ENCODE measurements at regions of chr10 and their contacts with region 1.

Region 1: DNA sequence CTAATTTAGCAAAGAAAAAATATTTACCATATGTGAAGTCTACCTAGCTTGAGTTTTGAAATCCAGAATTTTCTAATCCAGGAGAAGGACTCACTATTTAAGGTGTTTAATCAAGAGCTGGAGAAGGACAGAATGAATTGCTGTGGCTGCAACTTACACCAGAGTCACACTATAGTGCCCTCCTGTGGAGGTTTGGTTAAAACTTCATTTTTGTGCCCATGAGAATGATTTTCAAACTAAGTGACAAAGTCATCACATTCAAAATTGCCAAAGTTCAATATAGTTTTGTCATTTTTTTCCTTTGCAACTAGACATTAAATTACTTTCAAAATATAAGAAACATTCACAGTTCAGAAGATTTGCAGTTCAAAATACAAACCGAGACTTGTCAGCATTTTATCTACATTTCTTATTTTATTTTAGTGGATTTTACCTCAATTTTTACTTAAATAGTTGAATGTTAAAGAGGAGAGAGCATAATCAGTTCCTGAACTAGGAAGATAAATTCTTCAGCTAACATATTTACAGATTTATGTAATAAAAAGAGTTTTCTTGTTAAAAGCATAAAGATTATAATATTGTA is 70.7 kb downstream of the CABCOCO1 start:
- DNase-seq: peak; percentile 96
- ATAC-seq: peak; percentile 88
- H3K4me3 ChIP-seq: no peak overlapping the region
- H3K27ac ChIP-seq: no peak overlapping the region
- H3K4me1 ChIP-seq: no peaks in the 10 kb centered on the region
- H3K27me3 ChIP-seq: 0 out of 2 replicates have a peak, but pooled peaks cover 7% of the 10 kb centered on the region
- CTCF ChIP-seq: peak; percentile 100

Region 2: DNA sequence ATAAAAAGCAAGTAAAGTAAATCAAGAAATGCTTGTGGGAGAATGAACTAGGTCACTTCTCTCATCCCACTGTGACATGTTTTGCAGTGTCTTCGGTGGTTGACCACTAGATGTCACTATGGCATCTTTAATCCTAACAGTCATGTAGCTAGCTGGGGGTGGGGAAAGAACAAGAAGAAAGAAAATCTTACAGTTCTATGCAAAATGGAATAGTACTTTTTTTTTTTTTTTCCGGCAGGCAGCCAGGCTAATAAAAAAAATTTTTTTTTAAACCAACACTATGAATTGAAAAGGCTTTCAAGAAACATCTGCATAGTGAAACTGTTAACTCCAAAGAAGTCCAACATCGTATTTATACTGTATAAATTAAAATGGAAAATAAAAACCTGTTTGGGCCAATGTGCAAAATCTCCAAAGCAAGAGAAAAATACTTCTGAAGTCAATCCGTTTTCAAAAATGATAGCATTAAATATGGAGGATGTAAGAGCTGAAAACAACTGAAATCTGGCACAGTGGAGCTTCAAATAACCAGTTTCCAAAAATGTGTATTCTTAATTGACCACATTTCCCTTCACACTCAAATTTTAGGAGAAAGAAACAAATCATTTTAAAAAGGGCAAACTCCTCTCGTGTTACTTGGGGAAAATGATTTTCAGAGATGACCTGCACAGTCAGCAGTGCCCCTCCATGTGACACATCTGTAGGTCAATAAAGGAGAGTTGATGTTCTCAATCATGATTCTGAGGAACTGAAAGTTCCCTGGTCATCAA is 916.6 kb before region 1 on chr10:
- CTCF ChIA-PET with region 1: no interaction called
- POLR2A ChIA-PET with region 1: no interaction called
- intact Hi-C with region 1: loop called (anchors 2 kb)
- DNase-seq: peak; percentile 97
- ATAC-seq: peak; percentile 93
- H3K4me3 ChIP-seq: no peak overlapping the region
- H3K27ac ChIP-seq: no peak overlapping the region
- H3K4me1 ChIP-seq: peaks cover 6% of the 10 kb centered on the region; the same call in 1 of the 2 replicates
- H3K27me3 ChIP-seq: no peaks in the 10 kb centered on the region
- CTCF ChIP-seq: peak; percentile 100

Region 3: DNA sequence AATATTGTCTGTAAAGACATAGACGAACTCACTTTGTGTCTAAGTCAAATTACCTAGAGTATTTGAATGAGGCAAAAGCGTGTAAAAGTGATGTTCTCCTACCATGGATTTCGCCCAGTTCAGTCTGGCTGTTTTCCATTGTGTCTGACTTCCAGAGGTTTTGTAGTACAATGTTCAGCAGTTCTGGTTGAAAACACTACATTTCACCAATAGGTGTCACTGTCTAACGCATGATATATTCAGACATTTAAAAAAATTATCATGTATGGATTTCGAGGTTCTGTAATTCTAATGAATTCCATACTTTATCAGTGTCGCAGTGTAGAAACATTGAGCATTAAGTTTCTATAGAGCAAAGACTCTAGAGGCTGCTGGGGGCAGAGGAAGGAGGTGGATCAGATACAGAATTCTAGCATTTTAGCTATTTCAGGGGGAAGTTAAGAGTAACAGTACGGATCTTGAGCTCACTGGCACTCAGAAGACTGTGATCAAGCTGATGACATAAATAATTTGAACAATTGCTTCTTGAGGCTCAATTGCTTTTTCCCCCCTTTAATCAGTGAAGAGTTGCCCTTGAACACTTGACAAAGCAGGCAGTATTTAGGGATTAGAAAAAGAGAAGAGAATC is 592.6 kb before region 1 on chr10:
- CTCF ChIA-PET with region 1: no interaction called
- POLR2A ChIA-PET with region 1: no interaction called
- intact Hi-C with region 1: loop called (anchors 1 kb)
- DNase-seq: peak; percentile 96
- ATAC-seq: peak; percentile 83
- H3K4me3 ChIP-seq: no peak overlapping the region
- H3K27ac ChIP-seq: no peak overlapping the region
- H3K4me1 ChIP-seq: peaks cover 11% of the 10 kb centered on the region
- H3K27me3 ChIP-seq: no peaks in the 10 kb centered on the region
- CTCF ChIP-seq: peak; percentile 99

Region 4: DNA sequence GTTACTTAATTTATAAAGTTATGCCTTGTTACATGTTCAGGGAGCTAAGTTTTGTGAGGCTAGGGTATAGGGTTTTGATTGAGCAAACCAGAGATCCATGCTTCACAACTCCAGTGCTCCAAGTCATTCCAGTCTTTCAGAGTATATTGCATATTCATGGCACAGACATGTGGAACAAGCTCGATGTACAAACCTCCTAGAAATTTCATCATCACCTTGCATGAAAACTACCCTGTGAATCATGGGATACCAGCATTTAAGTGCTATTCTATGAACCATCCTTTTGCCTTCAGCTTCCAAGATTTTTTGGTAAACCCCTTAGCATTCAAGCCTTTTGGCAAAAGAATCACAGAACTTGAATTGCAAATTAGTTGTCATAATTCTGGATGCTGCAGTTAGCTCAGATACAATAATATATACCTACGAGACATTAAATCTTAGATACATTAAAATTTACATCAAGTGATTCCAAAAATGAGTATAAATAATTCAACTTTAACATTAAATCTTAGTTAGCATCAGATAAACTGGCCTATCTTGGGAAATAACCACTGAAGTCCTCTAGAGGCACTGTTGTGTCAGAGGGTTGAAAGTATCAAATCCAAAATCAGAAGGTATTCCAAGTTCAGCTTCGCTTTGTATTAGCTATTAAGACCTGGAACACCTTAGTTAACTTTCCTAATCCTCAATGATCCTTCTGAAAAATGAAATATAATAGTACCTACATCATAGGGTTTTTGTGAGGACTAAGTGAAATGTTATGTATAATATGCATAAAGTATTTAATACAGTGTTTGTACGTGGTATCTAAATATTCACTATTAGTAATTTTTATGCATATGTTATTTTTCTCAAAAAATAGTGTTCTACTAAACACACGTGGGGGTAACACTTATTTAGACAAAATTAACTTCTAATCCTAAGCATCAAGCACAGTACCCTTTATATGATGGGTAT is 126.2 kb before region 1 on chr10:
- CTCF ChIA-PET with region 1: interaction called, 9 read pairs
- POLR2A ChIA-PET with region 1: no interaction called
- intact Hi-C with region 1: loop called (anchors 1 kb)
- DNase-seq: peak; percentile 84
- ATAC-seq: peak; percentile 90
- H3K4me3 ChIP-seq: no peak overlapping the region
- H3K27ac ChIP-seq: no peak overlapping the region
- H3K4me1 ChIP-seq: no peaks in the 10 kb centered on the region
- H3K27me3 ChIP-seq: no peaks in the 10 kb centered on the region
- CTCF ChIP-seq: peak; percentile 99

Region 5: DNA sequence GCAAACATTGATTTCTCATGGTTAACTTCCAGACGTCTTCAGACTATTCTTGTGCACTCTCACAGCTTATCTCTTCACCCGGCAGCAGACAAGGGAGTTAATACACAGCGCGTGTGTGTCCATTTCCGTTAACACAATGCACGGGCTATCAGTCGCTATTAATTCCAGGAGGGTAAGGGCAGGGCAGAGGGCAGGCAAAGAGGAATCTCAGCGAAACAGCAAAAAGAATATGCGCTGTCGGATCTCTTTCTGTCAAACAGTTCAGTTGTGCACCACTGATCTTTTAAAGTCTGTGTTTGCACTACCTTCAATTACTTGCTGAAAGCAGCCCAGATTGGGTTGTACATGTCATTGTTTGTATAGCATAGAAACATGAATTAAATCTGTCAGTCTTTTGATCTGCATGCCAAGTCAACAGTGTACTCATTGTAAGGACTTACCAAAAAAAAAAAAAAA is 111.8 kb before region 1 on chr10:
- CTCF ChIA-PET with region 1: interaction called, 3 read pairs
- POLR2A ChIA-PET with region 1: no interaction called
- intact Hi-C with region 1: loop called (anchors 5 kb)
- DNase-seq: peak; percentile 89
- ATAC-seq: peak; percentile 92
- H3K4me3 ChIP-seq: peak overlapping the region; percentile 34
- H3K27ac ChIP-seq: no peak overlapping the region
- H3K4me1 ChIP-seq: peaks cover 11% of the 10 kb centered on the region
- H3K27me3 ChIP-seq: no peaks in the 10 kb centered on the region
- CTCF ChIP-seq: no peak

Region 6: GRCh38 chr10:61669161-61669725 is 64.2 kb before region 1 on chr10:
- CTCF ChIA-PET with region 1: interaction called, 5 read pairs
- POLR2A ChIA-PET with region 1: no interaction called
- intact Hi-C with region 1: loop called (anchors 5 kb)
- DNase-seq: no peak
- ATAC-seq: peak; percentile 49; the same call in 1 of the 2 replicates
- H3K4me3 ChIP-seq: no peak overlapping the region
- H3K27ac ChIP-seq: no peak overlapping the region
- H3K4me1 ChIP-seq: no peaks in the 10 kb centered on the region
- H3K27me3 ChIP-seq: no peaks in the 10 kb centered on the region
- CTCF ChIP-seq: peak; percentile 56

Region 7: DNA sequence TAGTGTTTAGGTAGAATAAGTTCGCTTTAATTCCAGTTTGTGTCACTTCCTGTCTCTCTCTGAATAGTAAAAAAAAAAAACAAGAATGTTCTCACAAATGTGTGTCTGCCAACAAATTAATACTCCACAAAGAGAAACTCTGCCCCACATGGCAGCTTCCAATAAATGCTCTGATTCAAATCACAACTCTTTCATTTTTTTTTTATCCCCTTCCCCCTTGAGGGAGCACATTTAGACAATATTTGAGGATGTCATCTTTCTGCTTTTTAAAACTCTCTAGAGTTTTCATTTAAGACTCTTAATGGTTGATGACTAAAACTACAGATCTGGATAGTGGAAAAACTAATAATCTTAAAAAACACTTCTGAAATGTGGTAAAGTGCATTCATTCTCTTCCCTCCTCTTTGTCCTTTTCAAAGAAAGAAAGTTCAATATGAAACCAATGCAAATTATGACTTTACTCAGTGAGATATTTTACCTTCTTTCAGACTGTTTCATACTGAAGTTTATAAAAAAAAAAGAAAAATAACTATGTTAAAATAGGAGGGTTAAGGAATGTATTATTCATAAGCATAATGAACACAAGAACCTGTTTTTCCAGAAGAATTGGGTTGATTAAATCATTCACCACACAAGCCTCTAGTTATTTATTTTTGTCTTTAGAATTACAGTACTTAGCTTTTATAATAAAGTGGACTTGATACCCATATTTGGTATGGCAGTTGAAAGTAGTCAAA is 210.4 kb after region 1 on chr10:
- CTCF ChIA-PET with region 1: no interaction called
- POLR2A ChIA-PET with region 1: interaction called, 19 read pairs
- intact Hi-C with region 1: no loop called
- DNase-seq: peak; percentile 99
- ATAC-seq: peak; percentile 14
- H3K4me3 ChIP-seq: peak overlapping the region; percentile 31
- H3K27ac ChIP-seq: peak overlapping the region; percentile 72
- H3K4me1 ChIP-seq: peaks cover 65% of the 10 kb centered on the region
- H3K27me3 ChIP-seq: no peaks in the 10 kb centered on the region
- CTCF ChIP-seq: peak; percentile 73

Region 8: GRCh38 chr10:62715383-62715782 is 981.9 kb after region 1 on chr10:
- CTCF ChIA-PET with region 1: no interaction called
- POLR2A ChIA-PET with region 1: no interaction called
- intact Hi-C with region 1: no loop called
- DNase-seq: no peak
- ATAC-seq: no peak
- H3K4me3 ChIP-seq: no peak overlapping the region
- H3K27ac ChIP-seq: no peak overlapping the region
- H3K4me1 ChIP-seq: no peaks in the 10 kb centered on the region
- H3K27me3 ChIP-seq: no peaks in the 10 kb centered on the region
- CTCF ChIP-seq: no peak

Measured in PC-3 (cell line).